ENCODE measurements at regions of chrX and their contacts with region 1.

Region 1: DNA sequence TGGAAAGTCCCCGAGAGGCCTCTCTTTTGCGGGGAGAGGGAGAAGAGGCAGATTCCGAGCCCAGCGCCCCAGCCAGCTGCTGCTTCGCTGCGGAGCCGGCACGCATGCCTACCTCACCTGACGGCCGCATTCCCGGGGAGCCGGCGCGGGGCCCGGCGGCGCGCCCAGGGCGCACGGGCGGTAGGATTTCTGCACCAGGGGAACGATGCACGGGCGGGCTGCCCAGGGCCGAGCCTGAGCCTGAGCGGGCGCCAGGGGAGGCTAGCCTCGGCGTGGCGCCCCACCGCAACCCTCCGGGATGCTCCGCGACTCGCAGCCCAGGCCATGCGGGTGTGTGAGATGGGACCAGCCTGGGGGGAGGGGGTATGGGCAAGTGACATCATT is 81.3 kb upstream of the SCML1 start:
- DNase-seq: no peak
- ATAC-seq: no peak
- H3K4me3 ChIP-seq: no peak overlapping the region
- H3K27ac ChIP-seq: no peak overlapping the region
- H3K4me1 ChIP-seq: no peaks in the 10 kb centered on the region
- CTCF ChIP-seq: no peak
- EP300 ChIP-seq: no peak
- POLR2A ChIP-seq: no peak
- RAD21 ChIP-seq: no peak

Region 2: DNA sequence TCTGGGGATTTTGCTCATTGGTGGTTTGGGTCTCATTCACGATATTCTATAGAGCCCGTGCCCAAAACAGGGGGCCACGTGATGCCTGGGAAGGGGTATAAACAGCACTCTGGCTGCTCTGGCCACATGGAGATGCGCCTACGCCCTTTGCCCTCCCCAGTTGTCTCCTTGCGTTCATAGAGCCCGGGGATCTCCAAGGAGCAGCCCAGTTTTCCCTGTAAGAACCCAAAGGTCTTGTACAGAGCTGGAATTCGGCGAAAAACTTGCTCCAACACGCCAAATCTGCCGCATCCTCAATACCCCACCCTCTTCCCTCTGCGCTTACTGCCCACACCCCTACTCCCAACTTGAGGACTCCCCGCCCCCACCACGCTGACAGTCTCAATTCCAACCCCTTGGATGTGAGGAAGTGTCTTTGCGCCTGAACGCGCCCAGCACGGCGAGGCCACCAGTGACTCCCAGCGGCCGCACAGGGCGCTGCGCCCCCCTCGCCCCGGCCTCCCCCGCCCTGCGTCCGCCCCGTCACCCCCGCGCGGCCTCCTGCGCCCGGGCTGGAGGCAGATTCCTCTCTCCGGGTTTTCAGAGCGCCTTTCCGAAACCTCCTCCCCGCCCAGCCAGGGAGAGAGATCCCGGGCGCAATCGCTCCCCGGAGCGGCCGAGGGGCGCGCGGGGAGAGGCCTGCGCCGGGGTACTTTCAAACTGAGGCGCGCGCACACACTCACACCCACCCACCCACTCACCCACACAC is 281.2 kb before region 1 on chrX and contains the start of gene NHS:
- CTCF ChIA-PET with region 1: no interaction called
- POLR2A ChIA-PET with region 1: no interaction called
- DNase-seq: peak; percentile 68 to 87
- ATAC-seq: peak; percentile 82 to 84
- H3K4me3 ChIP-seq: peak within 1 kb of the TSS; percentile 93
- H3K27ac ChIP-seq: peak within 1 kb of the TSS; percentile 88 to 98
- H3K4me1 ChIP-seq: peaks cover 16% of the 10 kb centered on the region; the same call in 2 of the 3 replicates
- CTCF ChIP-seq: peak; percentile 56
- EP300 ChIP-seq: no peak
- POLR2A ChIP-seq: no peak
- RAD21 ChIP-seq: peak; percentile 49 to 84; a peak in 4 of 5 replicates
- polyA plus RNA-seq, gene NHS: 5.0 and 9.9 TPM in 2 replicates

Region 3: DNA sequence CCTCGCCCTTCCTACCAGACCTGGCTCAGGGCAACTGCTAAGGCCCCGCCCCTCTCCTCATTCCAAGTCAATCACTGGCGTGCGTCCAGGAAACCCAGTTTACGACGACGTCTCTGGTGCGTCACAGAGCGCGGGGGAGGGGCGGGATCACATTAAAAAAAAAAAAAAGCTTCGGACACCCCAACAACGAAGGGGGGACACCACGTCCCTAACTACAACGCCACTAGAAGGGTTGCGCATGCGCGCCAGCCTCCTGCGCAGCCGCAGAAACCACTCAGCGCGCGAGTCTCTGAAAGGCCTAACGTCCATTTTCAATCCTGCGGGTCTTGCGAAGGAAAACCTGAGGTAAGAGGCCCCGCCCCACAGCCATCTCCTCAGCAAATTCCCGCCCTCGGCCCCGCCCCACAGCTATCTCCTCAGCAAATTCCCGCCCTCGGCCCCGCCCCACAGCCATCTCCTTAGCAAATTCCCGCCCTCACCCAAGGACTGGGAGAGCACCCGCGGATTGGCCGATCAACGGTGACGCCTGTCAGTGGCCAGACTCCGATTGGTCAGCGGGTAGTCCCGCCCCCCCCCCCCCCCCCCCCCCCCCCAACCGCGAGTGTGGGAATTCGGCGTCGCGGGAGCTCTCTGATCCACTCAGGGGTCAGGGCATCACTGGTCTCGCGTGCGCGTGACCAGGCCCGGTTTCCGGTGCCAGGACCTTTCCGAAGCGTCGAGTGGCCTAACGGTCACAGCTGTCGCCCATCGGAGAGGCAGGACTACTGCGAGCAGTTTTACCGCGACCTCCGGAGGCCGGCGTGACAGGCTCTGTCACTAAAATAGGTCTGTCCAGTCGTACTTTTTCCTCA is 81.1 kb after region 1 on chrX and contains the start of gene SCML1:
- CTCF ChIA-PET with region 1: no interaction called
- POLR2A ChIA-PET with region 1: interaction called, 10 read pairs
- DNase-seq: peak; percentile 84 to 98
- ATAC-seq: peak; percentile 96
- H3K4me3 ChIP-seq: peak within 1 kb of the TSS; percentile 53
- H3K27ac ChIP-seq: peak within 1 kb of the TSS; percentile 68 to 86
- H3K4me1 ChIP-seq: peaks cover 13% of the 10 kb centered on the region; the same call in 2 of the 3 replicates
- CTCF ChIP-seq: no peak
- EP300 ChIP-seq: no peak
- POLR2A ChIP-seq: peak; percentile 37; the same call in 1 of the 2 replicates
- RAD21 ChIP-seq: no peak
- polyA plus RNA-seq, gene SCML1: 10.3 and 13.3 TPM in 2 replicates

Measured in A549 (cell line).